ENCODE measurements at regions of chr10 and their contacts with region 1.

Region 1: DNA sequence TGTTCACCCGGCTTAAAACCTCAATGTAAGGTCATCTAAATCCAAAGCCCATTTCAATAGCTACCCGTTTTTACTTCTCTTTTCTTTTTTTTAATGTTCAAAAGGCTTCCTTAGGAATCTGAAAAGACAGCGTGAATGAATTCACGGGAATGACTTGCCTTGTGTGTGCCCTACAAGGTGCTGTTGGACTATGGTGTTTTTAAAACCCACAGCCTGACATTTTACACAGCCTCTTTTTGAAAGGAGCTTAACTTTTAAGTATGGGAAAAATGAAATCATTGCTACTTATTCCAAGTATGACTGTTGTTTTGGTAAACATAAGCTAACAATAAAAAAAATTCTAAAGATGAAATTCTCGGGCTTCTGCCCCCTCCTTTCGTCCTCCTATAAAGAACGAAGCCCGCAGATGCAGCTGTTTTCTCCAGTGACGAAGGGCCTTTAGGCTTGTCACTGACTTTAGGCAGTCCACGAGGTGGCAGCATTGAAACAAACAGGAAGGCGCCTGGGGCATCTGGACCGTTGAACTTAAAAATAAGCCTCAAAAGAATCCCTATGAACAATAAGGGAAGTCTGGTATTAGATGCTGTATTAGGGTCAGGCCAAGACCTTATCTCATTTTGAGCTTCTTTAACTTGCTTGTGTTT is 141.3 kb downstream of the NRP1 start:
- DNase-seq: peak; percentile 41 to 95 (median 70)

Region 2: DNA sequence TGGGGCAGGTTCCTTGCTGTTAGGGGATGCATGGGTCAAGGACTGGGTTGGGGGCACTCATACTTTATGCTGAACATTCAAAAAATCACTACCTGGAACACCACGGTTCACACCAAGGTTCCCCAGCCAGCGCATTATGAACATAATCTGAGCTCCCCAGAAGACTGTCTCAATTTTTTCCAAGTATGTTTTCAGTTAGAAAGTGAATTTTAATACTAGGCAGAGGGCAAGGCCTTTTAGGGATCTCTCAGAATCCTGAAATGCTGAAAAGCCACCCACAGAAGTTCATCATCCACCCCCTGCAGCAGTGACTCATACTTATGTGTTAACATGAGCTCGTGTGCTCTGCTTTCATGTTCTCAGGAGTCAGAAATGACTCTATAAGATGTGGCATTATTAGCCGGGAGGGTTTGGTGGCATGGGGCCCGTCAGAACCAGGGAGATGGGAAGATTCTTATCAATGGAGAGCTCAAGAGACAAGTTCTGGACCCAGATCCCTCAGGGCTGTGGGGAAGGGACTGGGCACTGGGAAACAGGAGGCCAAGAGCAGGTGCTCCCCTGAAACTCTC is 49.9 kb before region 1 on chr10:
- intact Hi-C with region 1: no loop called
- DNase-seq: no peak

Region 3: DNA sequence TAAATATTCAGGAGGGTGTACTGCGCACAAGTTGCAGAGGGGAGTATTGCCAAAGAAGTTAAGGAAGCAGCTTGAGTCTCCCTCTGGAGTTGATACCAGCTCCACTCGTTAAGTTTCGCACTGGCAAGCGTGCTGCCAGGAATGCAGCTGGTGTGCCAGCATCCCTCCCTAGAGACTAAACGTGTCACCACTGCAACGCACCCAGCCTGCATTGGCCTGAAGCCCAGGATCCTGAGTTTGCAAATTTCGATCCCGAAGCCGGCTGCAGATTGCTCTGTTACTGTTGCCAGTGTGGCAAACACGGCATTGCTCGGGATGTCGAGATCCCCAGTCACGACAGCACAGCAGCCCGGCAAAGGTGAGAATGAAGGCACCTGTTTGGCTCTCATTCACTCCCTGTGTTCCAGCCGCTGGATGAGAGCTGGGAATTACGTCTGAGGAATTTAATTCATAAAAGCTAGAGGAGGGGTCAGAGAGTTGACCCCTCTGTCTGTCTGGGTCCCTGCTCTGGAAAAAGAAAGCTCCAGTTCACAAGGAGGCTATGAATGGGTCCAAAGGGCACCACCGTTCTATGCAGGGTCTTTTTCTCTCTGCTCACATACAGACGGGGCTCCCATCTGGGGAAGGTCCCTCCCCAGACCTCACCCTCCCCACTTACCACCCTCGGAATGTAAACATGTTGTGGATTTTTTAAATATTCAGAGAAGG is 80.3 kb after region 1 on chr10:
- intact Hi-C with region 1: loop called (anchors 10 kb)
- DNase-seq: peak; percentile 47 to 97 (median 84)

Region 4: GRCh38 chr10:33291955-33292354 is 98.8 kb after region 1 on chr10:
- intact Hi-C with region 1: no loop called
- DNase-seq: no peak

Region 5: DNA sequence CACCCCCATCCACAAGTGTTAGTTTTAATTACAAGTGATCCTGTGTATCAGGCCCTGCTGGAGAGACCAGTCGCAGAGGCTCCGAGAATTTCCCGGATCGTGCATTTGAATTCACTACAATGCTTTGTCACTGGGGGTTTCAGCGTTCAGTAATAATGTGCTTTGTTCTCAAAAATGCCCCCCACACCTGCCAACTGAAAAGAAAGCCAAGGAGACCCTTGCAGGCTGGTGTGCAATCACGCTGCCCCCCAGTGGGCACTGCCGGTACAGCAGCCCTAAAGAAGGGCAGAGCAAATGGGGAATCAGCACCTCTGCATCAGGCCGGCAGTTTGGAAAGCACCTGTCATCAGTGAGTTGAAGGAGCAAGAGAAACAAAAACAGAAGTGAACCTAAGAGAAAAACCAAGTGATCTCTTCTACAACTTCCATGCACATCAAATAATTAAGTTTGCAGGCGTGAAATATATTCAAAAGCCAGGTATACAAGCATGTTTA is 1444.3 kb after region 1 on chr10:
- intact Hi-C with region 1: loop called (anchors 2 kb)
- DNase-seq: peak; percentile 40 to 95 (median 75)